ENCODE measurements at regions of chr11 and their contacts with region 1.

Region 1: GRCh38 chr11:6377902-6378639 is 12.2 kb upstream of the SMPD1 start:
- DNase-seq: peak; percentile 53
- ATAC-seq: peak; percentile 84
- H3K4me3 Mint-ChIP-seq: peak overlapping the region; percentile 55
- H3K27ac Mint-ChIP-seq: peak overlapping the region; percentile 91
- H3K4me1 Mint-ChIP-seq: peaks cover 39% of the 10 kb centered on the region
- H3K27me3 Mint-ChIP-seq: no peaks in the 10 kb centered on the region

Region 2: DNA sequence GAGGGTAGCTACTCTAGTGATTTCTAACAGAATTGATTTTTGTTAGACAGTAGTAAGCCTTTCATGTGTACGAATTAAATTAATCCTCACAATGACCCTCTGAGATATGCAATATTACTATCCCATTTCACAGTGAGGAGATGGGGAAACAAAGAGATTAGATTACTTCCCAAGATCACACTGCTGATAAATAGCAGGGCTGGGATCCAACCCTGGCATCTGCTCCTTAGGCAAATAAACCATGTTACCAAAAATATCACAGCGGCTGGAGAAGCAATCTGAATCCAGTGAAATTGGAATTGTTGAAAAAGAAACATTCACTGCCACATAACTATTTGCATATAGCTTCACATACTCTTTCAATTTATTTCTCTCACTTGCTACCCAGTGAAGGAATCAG is 45.0 kb before region 1 on chr11:
- CTCF ChIA-PET with region 1: no interaction called
- POLR2A ChIA-PET with region 1: no interaction called
- DNase-seq: no peak
- ATAC-seq: no peak
- H3K4me3 Mint-ChIP-seq: no peak overlapping the region
- H3K27ac Mint-ChIP-seq: no peak overlapping the region
- H3K4me1 Mint-ChIP-seq: no peaks in the 10 kb centered on the region
- H3K27me3 Mint-ChIP-seq: peaks cover 25% of the 10 kb centered on the region

Region 3: DNA sequence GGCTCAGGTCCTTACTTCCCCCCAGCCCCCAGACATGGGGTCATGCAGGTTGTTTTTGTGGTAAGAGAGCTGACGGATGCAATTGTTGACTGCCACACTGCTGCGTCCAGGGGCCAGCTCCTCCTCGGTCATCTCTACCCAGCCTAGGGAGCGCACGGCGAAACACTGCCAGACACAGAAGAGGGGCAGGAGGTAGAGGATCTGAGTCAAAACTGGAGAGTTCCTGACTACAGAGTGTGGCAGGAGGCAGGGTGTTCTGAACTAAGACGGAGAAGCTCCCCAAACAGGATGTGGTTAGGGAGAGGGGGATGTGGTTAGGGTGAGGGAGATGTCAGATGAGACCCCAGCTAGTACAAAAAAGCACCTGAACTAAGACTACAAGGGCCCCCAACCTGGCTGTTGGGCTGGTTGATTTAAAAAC is 24.5 kb after region 1 on chr11:
- CTCF ChIA-PET with region 1: interaction called, 45 read pairs
- POLR2A ChIA-PET with region 1: interaction called, 17 read pairs
- DNase-seq: peak; percentile 95
- ATAC-seq: peak; percentile 93
- H3K4me3 Mint-ChIP-seq: peak overlapping the region; percentile 81
- H3K27ac Mint-ChIP-seq: peak overlapping the region; percentile 98
- H3K4me1 Mint-ChIP-seq: peaks cover 66% of the 10 kb centered on the region
- H3K27me3 Mint-ChIP-seq: no peaks in the 10 kb centered on the region

Region 4: DNA sequence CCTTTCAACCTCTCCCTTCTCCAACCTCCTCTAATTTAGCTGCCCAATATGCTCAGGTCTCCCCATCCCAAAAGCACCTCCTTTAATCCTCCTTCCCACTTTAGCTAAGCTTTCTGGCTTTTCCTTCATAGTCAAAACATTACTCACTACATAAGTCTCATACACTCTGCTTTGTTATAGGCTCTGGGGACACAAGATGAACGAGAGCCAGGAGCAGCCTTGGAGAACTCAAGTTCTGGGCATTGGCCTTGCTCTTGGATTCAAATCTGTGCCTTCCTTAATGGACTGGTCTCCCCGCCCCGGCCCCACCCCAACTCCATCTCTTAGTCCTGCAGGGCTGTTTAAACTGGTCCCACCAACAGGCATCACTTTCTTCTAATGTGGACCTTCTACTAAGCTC is 74.1 kb after region 1 on chr11:
- CTCF ChIA-PET with region 1: interaction called, 657 read pairs
- POLR2A ChIA-PET with region 1: interaction called, 3 read pairs
- DNase-seq: no peak
- ATAC-seq: no peak
- H3K4me3 Mint-ChIP-seq: no peak overlapping the region
- H3K27ac Mint-ChIP-seq: no peak overlapping the region
- H3K4me1 Mint-ChIP-seq: no peaks in the 10 kb centered on the region
- H3K27me3 Mint-ChIP-seq: no peaks in the 10 kb centered on the region

Region 5: DNA sequence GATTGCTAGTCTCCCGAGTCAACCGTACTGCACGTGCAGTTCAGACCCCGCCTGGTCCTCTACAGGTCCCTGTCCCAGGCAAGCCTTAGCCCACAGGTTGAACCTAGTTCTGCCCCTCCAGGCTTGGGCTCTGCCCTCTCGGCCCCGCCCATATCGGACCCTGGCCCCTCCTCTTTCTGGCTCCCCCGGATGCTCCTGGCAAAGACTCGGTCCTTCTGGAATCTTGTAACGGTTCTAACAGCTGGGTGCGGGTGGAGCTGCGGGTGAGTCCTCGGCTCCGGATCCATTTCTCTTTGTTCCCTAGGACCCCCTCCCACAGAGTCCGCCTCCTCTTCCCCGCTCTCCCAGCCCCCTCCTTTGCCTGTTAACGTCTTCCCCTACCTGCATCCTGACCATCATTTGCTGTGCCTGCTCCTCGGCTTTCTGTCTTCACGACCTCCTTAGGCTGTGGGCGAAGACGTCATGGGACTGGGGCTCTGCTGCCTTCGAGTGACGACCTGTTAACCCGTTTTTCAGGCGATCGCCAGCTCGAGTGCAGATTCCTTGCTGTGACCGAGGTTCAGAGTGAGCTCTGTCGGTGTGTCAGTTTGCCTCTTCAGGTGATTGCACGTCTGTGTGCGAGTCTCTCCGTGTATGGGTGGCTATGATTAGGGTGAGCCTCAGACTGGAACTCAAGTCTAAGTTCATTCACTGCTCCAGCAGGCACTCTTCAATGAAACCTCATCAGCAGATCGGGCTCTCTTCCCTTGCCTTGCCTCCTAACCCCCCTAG is 119.2 kb after region 1 on chr11 and contains the start of gene DNHD1:
- CTCF ChIA-PET with region 1: interaction called, 41 read pairs
- POLR2A ChIA-PET with region 1: no interaction called
- DNase-seq: no peak
- ATAC-seq: no peak
- H3K4me3 Mint-ChIP-seq: no peak within 1 kb of the TSS
- H3K27ac Mint-ChIP-seq: no peak within 1 kb of the TSS
- H3K4me1 Mint-ChIP-seq: peaks cover 13% of the 10 kb centered on the region
- H3K27me3 Mint-ChIP-seq: no peaks in the 10 kb centered on the region
- total RNA-seq, gene DNHD1: 17.8 to 18.5 TPM

Region 6: DNA sequence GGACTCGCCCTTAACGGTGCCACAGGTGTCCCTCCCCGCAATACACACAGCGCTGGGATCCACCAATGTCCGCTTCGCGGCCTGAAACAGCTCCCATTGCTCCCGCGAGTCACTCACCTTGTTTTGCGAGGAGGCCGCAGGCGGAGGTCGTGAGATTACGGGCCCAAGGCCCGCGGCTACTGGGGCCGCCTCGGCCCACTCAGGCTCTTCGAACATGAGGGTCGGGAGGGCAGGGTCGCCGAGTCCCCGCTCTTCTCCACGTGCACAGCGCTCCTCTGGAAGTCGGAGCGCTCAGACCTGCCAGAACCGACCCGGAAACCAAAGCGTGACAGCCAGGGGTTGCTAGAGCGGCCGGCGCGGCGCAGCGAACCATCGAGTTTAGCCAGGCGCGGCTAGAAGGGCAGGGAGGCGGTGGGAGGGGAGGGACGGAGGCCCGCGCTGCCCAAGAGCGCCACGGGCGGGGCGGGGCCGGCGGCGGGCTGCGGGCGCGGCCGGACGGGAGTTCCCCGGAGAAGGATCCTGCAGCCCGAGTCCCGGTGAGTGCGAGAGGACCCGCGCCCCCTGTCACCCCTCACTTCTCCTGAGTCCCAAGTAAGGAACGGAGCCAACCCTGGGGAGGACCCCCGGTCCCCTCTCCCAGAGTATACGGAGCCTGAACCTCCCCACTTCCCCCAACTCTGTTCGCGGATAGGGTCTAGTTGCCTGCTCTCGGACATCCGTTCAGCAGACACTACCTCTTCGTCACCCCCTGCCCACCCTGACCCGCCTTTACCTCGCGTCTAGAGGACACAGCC is 225.4 kb after region 1 on chr11 and contains the starts of genes ILK and RRP8:
- CTCF ChIA-PET with region 1: interaction called, 16 read pairs
- POLR2A ChIA-PET with region 1: no interaction called
- DNase-seq: peak; percentile 92
- ATAC-seq: peak; percentile 82
- H3K4me3 Mint-ChIP-seq: no peak within 1 kb of the TSS
- H3K27ac Mint-ChIP-seq: no peak within 1 kb of the TSS
- H3K4me1 Mint-ChIP-seq: peaks cover 35% of the 10 kb centered on the region
- H3K27me3 Mint-ChIP-seq: no peaks in the 10 kb centered on the region
- total RNA-seq, gene ILK: 195 to 197 TPM
- total RNA-seq, gene RRP8: 28.6 to 29.8 TPM

Region 7: GRCh38 chr11:6746086-6746618 is 368.1 kb after region 1 on chr11:
- CTCF ChIA-PET with region 1: interaction called, 23 read pairs
- POLR2A ChIA-PET with region 1: no interaction called
- DNase-seq: peak; percentile 65
- ATAC-seq: peak; percentile 85
- H3K4me3 Mint-ChIP-seq: no peak overlapping the region
- H3K27ac Mint-ChIP-seq: no peak overlapping the region
- H3K4me1 Mint-ChIP-seq: peaks cover 41% of the 10 kb centered on the region
- H3K27me3 Mint-ChIP-seq: no peaks in the 10 kb centered on the region

Measured in activated CD8-positive, alpha-beta T cell treated with anti-CD3 and anti-CD28 coated beads, Interleukin-2, amount 10 ng/mL, durations not matched to agents 7 days and 5 days (primary cell).